Right ventricle myocardium inferior (tissue), 1 donor: ENCODE measurements at regions of chr2 and their contacts with region 1.

Region 1: DNA sequence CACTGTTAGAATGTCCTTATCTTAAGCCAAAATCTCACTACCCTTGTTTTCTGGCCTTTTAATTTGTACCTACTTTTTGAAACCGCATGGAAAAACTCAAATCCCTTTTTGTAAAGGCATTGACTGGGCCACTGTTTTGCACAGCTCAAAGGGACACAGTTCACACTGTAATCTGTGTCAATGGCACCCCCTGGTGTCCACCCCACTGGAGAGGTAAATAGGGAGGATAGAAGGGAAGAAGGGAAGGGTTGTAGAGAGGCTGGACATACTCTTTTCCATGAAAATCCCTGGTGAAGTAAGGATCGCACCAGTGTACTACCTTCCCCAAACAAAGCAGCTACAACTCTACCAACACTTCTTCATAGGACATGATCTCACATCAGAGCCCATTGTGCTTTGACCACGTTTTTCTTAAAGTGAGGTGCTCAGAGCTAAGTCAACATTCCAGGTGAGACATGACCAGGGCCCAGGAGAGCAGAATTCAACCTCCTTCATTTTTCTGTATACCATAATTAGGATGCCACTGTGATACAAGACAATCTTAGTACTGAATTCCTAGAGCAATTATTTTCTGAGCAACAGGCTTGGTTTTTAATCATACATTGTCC is 92.4 kb upstream of the RMDN2 start:
- DNase-seq: peak; percentile 93
- ATAC-seq: peak; percentile 81

Region 2: DNA sequence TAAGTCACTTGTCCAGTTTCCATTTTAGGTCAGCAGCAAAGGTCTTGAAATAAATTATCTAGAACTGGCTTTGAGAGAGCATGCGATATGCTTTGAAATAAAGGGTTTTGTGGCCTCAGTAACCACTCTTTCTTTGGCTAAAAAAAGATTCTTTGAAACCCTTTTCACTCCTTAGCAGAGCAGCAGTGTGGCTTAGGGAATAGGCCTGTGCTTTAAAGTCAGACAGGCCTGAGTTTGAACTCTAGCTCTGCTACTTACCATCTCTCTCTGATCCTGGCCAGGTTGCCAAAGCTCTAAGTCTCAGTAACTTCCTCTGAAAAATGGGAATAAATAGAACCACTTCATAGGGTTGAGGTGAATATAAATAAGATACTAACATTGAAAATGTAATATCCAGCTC is 435.5 kb before region 1 on chr2:
- intact Hi-C with region 1: loop called (anchors 2 kb)
- DNase-seq: no peak
- ATAC-seq: no peak

Region 3: GRCh38 chr2:37414470-37414949 is 418.2 kb before region 1 on chr2:
- intact Hi-C with region 1: loop called (anchors 1 kb)
- DNase-seq: no peak
- ATAC-seq: peak; percentile 75

Region 4: DNA sequence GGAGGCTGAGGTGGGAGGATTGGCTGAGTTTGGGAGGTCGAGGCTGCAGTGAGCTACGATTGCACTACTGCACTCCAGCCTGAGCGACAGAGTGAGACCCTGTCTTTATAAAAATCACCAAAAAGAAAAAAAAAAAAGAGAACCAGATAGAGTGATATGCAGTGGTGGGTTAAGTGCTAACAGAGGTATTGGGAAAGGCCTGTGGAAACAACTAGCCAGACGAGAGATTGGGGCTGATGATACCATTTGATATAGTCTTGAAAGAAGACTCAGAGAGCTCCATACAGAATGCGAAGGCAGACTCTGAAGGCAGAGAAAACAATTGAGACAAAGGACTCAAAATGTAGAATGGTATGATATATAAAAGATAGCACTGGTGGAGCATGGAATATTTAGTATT is 295.4 kb before region 1 on chr2:
- intact Hi-C with region 1: loop called (anchors 5 kb)
- DNase-seq: no peak
- ATAC-seq: no peak

Region 5: GRCh38 chr2:37653805-37654378 is 178.8 kb before region 1 on chr2:
- intact Hi-C with region 1: loop called (anchors 5 kb)
- DNase-seq: peak; percentile 76
- ATAC-seq: peak; percentile 84

Region 6: GRCh38 chr2:37698931-37699481 is 133.7 kb before region 1 on chr2:
- intact Hi-C with region 1: no loop called
- DNase-seq: no peak
- ATAC-seq: no peak

Region 7: GRCh38 chr2:37877457-37878315 is 45.0 kb after region 1 on chr2:
- intact Hi-C with region 1: loop called (anchors 2 kb)
- DNase-seq: no peak
- ATAC-seq: peak; percentile 52